Head of caudate nucleus (tissue), 42 donors: ENCODE measurements at regions of chr18 and their contacts with region 1.

Region 1: DNA sequence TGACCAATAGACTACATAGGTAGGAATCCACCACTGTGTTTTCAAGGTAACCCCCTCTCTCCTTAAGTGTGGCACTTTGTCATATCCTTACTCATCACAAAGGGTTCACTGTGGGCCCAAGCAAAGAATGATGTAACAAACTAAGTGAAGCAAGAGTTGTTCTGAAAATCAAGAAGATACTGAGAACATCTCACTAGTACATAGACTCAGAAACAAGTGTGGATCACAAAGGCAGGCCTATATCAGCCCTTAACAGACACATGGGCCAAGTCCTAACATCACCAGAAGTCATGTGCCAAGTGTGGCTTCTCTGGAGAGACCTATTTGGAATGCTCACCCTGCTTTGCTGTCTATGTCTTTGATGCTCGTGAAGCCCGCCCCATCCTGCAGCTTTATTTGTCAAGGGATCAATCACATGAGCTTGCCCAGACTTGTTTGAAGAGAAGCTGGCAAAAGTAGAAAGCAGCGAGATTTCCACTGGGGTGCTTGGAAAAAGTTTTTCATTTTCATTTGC is 131.2 kb upstream of the TTC39C start:
- DNase-seq: no peak

Region 2: DNA sequence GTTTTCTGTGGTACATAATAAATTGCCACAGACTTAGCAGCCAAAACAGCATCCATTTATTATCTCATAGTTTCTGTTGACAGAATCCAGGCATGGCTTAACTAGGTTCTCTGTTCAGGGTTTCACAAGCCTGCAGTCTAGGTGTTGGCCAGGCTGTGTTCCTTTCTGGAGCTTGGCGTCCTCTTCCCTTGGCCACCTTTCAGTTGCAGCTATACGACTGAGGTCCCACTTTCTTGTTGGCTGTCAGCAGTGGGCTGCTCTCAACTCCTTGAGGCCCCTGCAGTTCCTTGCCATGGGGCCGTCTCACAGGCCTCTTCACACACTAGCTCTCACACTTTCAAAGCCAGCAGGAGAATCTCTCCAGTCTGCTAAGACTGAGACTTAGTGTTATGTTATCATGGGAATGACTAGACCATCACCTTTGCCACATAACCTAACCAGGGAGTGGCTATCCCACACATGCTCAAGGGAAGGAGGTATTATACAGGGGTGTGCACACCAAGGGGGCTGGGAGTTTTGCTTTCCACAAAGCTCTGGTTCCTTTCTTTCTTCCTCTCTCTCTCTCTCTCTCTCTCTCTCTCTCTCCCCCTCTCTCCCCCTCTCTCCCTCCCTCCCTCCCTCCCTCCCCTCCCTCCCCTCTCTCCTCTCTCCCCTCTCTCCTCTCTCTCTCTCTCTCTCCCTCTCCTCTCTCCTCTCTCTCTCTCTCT is 414.4 kb before region 1 on chr18:
- intact Hi-C with region 1: no loop called
- DNase-seq: no peak

Region 3: DNA sequence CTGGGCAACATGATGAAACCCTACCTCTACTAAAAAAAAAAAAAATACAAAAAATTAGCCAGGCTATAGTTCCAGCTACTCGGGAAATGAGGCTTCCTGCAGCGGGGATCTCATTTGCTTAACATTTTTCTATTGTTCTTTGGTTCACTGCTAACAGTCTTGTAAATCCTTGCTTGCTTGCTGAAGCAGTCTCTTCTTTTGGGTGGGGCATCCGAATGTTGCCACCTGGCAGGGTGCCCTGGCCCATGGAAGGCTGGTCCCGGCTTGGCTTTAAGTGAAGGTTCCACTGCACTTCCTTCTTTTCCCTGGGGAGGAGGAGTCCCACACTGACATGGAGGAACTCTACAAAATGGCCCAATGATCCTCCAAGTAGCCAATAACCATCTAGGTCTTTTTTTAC is 214.6 kb before region 1 on chr18:
- intact Hi-C with region 1: no loop called
- DNase-seq: no peak

Region 4: GRCh38 chr18:23837591-23837990 is 45.7 kb before region 1 on chr18:
- intact Hi-C with region 1: loop called (anchors 10 kb)
- DNase-seq: no peak

Region 5: DNA sequence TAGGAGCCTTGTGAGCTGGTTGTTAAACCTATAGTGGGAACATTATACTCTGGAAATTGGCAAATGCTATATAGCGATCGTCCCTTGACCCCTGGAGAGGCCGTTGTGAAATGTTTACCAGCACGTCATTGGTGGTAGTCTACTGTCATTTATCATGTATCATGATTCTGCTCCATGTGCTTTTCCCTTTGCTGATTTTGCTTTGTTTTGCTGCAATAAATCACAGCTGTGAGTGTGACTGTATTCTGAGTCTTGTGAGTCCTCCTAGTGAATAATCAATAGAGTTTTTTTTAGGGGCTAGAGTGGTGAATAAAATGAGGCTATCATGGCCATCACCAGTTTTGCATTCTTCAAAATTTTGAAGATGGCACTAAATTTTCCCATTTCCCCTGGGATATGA is 766.2 kb after region 1 on chr18:
- intact Hi-C with region 1: no loop called
- DNase-seq: no peak